CD4-positive, alpha-beta T cell (primary cell): ENCODE measurements at regions of chr13 and their contacts with region 1.

Region 1: DNA sequence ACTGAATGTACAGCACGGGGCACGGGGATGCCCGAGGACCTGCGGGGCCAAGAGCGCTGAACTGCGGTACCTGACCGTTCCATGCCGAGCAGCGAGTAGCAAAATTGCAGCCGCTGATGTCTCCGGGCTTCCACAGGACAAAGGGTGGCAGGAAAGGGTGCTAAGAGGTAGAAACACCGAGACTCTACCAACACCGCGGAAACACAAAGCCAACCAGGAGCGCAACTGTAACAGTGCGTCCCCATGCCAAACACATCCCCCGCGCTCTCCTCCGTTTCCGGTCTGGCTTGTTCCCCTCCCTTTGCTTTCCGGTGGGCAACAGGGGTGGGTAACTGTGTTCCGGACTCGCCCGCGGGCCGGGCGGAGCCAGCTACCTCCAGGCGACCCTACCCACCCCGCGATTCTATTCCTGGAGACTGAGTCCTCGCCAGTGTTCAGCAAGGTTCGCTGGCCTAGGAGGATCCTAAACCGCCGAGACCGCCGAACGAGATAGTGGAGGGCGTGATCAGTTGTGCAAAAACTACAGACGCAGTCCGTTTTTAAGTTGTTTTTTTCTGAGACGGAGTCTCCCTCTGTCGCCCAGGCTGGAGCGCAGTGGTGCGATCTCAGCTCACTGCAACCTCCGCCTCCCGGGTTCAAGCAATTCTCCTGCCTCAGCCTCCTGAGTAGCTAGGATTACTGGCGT is 34.9 kb upstream of the NEK3 start:
- DNase-seq: peak; percentile 77 to 91 (median 86)
- ATAC-seq: peak; percentile 80
- H3K4me3 ChIP-seq: peak overlapping the region; percentile 85
- H3K4me3 Mint-ChIP-seq: peak overlapping the region; percentile 97
- H3K27ac ChIP-seq: peak overlapping the region; percentile 48 to 59
- H3K27ac Mint-ChIP-seq: peak overlapping the region; percentile 95
- H3K4me1 ChIP-seq: peaks cover 23% of the 10 kb centered on the region
- H3K4me1 Mint-ChIP-seq: peaks cover 33% of the 10 kb centered on the region
- H3K27me3 ChIP-seq: no peaks in the 10 kb centered on the region
- H3K27me3 Mint-ChIP-seq: no peaks in the 10 kb centered on the region
- CTCF ChIP-seq: no peak

Region 2: DNA sequence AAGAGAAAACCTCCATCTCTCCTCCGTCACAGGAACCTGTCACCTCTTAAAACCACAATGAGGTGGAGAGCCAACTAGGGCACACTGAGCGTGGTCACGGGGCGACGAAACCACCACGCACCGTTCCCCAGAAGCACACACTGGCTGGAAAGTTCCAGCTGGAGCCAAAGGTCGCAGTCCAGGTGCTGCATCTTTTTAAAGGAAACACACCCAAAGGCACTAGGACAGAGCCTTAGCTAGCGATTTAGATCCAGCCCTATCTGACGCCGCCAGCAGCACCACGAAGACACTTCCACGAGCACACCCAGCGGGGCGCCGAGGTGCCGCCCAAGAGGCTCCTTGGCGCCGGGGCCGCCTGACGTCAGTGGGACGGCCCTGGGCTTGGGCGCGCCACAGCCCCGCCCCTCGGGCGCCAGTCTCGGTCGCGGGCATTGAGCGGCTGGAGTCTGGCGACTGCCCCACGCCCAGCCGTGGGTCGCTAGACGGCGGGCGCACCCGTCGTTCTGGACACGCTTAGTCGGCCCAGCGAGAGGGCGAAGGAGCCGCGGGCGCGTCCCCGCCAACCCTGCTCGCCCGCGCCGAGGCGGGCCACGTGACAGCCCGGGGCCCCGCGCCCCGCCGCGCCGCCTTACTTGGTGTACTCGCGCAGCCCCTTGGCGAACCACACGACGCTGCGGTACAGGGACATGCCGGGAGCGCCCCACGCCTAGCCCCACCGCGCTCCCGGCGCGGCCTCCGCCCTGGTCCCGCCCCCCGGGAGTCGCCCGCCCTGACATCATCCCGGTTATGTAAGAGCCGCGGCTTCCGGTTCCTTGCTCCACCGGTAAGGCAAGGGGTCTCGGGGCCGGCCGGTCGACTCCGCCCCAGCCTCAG is 390.7 kb before region 1 on chr13 and contains the start of gene DHRS12:
- CTCF ChIA-PET with region 1: no interaction called
- POLR2A ChIA-PET with region 1: interaction called, 4 read pairs
- intact Hi-C with region 1: loop called in 1 of 2 experiments (anchors 5 kb)
- DNase-seq: peak; percentile 75 to 97 (median 82)
- ATAC-seq: peak; percentile 73
- H3K4me3 ChIP-seq: peak within 1 kb of the TSS; percentile 81
- H3K4me3 Mint-ChIP-seq: peak within 1 kb of the TSS; percentile 97
- H3K27ac ChIP-seq: peak within 1 kb of the TSS; percentile 99
- H3K27ac Mint-ChIP-seq: peak within 1 kb of the TSS; percentile 99
- H3K4me1 ChIP-seq: peaks cover 58% of the 10 kb centered on the region
- H3K4me1 Mint-ChIP-seq: peaks cover 61% of the 10 kb centered on the region
- H3K27me3 ChIP-seq: no peaks in the 10 kb centered on the region
- H3K27me3 Mint-ChIP-seq: no peaks in the 10 kb centered on the region
- CTCF ChIP-seq: no peak
- total RNA-seq, gene DHRS12: 10.0 to 14.8 TPM

Region 3: DNA sequence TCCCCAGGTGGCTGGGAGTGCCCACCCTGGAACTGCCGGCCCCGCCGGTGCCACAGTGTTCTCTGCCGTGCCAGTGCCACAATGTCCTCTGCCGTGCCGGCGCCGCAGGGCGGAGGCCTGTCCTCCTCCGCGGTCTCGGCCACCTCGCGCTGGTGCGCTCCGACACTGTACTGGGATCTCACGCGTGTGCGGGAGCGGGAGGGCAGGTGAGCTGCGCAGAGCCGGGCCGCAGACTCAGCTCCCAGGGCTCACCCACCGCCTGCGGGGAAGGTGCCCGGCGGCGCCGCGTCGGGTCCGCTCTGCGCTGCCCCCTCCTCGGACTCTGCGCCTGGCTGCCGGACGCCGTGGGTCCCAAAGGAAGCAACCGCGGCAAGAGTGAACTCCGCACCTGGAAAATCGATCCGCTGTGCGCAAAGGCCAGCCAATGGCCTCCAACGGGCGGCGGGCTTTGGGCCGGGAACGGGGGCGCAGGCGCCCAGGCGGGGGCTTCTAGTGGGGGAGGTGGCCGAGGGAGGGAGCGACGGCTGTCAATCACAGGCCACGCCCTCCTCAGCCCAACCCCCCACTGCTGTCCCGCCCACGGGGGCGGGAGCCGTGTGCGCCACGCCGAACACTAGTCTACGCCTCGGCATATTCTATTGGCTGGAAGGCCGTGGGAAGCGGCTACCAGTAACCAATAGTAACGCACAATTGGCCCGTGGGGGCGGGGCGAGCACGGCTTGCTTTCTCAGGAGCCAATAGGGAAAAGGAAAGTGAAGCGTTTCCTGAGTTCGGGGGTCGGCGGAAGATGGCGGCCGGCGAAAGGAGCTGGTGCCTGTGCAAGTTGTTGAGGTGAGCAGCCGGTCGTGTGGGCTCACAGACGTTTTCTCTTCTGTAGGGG is 182.5 kb before region 1 on chr13 and contains the start of gene ALG11:
- CTCF ChIA-PET with region 1: no interaction called
- POLR2A ChIA-PET with region 1: interaction called, 19 read pairs
- intact Hi-C with region 1: loop called in 1 of 2 experiments (anchors 2 kb)
- DNase-seq: peak; percentile 99 to 100 (median 99)
- ATAC-seq: peak; percentile 98
- H3K4me3 ChIP-seq: peak within 1 kb of the TSS; percentile 93
- H3K4me3 Mint-ChIP-seq: peak within 1 kb of the TSS; percentile 92
- H3K27ac ChIP-seq: peak within 1 kb of the TSS in 1 of 2 donors; percentile 56
- H3K27ac Mint-ChIP-seq: peak within 1 kb of the TSS; percentile 84
- H3K4me1 ChIP-seq: peaks cover 9% of the 10 kb centered on the region
- H3K4me1 Mint-ChIP-seq: peaks cover 24% of the 10 kb centered on the region
- H3K27me3 ChIP-seq: peaks cover 2 to 24% of the 10 kb centered on the region in 2 experiments
- H3K27me3 Mint-ChIP-seq: peaks cover 12% of the 10 kb centered on the region
- CTCF ChIP-seq: no peak
- total RNA-seq, gene ALG11: 25.8 to 29.8 TPM

Region 4: GRCh38 chr13:52159321-52160086 is 34.8 kb before region 1 on chr13 and contains the start of gene NEK3:
- CTCF ChIA-PET with region 1: interaction called, 5 read pairs
- POLR2A ChIA-PET with region 1: interaction called, 10 read pairs
- intact Hi-C with region 1: loop called in 1 of 2 experiments (anchors 2 kb)
- DNase-seq: peak; percentile 20 to 59 (median 43)
- ATAC-seq: peak; percentile 87
- H3K4me3 ChIP-seq: peak within 1 kb of the TSS; percentile 62
- H3K4me3 Mint-ChIP-seq: peak within 1 kb of the TSS; percentile 92
- H3K27ac ChIP-seq: no peak within 1 kb of the TSS
- H3K27ac Mint-ChIP-seq: peak within 1 kb of the TSS; percentile 83
- H3K4me1 ChIP-seq: peaks cover 16% of the 10 kb centered on the region
- H3K4me1 Mint-ChIP-seq: peaks cover 43% of the 10 kb centered on the region
- H3K27me3 ChIP-seq: no peaks in the 10 kb centered on the region
- H3K27me3 Mint-ChIP-seq: no peaks in the 10 kb centered on the region
- CTCF ChIP-seq: no peak
- total RNA-seq, gene NEK3: 7.0 TPM

Region 5: DNA sequence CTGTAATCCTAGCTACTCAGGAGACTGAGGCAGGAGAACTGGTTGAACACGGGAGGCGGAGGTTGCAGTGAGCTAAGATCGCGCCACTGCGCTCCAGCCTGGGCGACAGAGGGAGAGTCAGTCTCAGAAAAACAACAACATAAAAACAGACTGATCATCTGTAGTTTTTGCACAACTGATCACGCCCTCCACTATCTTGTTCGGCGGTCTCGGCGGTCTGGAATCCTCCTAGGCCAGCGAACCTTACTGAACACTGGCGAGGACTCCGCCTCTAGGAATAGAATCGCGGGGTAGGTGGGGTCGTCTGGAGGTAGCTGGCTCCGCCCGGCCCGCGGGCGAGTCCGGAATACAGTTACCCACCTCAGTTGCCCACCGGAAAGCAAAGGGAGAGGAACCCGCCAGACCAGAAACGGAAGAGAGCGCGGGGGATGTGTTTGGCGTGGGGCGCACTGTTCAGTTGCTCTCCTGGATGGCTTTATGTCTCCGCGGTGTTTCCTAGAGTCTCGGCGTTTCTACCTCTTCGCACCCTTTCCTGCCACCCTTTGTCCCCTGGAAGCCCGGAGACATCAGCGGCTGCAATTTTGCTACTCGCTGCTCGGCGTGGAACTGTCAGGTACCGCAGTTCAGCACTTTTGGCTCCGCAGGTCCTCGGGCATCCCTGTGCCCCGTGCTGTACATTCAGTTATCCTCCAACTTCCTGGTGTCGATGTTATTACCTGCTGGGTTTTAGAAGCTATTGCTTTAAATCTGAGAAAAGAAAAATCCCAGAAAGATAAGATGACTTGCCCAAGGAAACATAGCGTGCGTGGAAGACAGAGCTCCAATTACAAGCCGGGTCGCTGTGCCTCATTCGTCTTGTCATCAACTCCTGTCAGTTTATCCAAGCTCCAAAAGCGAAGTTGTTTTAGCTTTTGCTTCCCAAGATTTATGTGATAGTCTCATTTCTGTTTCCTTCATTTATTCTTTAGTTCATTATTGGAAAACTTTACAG is 423.0 kb after region 1 on chr13:
- CTCF ChIA-PET with region 1: no interaction called
- POLR2A ChIA-PET with region 1: no interaction called
- intact Hi-C with region 1: loop called in 1 of 2 experiments (anchors 10 kb)
- DNase-seq: peak; percentile 73 to 90 (median 81)
- ATAC-seq: peak; percentile 93
- H3K4me3 ChIP-seq: peak overlapping the region; percentile 81
- H3K4me3 Mint-ChIP-seq: peak overlapping the region; percentile 96
- H3K27ac ChIP-seq: peak overlapping the region; percentile 55 to 76
- H3K27ac Mint-ChIP-seq: peak overlapping the region; percentile 86
- H3K4me1 ChIP-seq: peaks cover 28% of the 10 kb centered on the region
- H3K4me1 Mint-ChIP-seq: peaks cover 42% of the 10 kb centered on the region
- H3K27me3 ChIP-seq: no peaks in the 10 kb centered on the region
- H3K27me3 Mint-ChIP-seq: no peaks in the 10 kb centered on the region
- CTCF ChIP-seq: no peak